BJ (cell line): ENCODE measurements at regions of chr14 and their contacts with region 1.

Region 1: GRCh38 chr14:55707365-55707804 is 127.4 kb downstream of the KTN1 start:
- DNase-seq: no peak
- H3K4me3 ChIP-seq: no peak overlapping the region
- H3K27me3 ChIP-seq: no peaks in the 10 kb centered on the region
- CTCF ChIP-seq: peak; percentile 68

Region 2: GRCh38 chr14:55502746-55503284 is 204.6 kb before region 1 on chr14:
- CTCF ChIA-PET with region 1: no interaction called
- POLR2A ChIA-PET with region 1: interaction called, 14 read pairs
- DNase-seq: no peak
- H3K4me3 ChIP-seq: no peak overlapping the region
- H3K27me3 ChIP-seq: 0 out of 2 replicates have a peak, but pooled peaks cover 3% of the 10 kb centered on the region
- CTCF ChIP-seq: no peak

Region 3: DNA sequence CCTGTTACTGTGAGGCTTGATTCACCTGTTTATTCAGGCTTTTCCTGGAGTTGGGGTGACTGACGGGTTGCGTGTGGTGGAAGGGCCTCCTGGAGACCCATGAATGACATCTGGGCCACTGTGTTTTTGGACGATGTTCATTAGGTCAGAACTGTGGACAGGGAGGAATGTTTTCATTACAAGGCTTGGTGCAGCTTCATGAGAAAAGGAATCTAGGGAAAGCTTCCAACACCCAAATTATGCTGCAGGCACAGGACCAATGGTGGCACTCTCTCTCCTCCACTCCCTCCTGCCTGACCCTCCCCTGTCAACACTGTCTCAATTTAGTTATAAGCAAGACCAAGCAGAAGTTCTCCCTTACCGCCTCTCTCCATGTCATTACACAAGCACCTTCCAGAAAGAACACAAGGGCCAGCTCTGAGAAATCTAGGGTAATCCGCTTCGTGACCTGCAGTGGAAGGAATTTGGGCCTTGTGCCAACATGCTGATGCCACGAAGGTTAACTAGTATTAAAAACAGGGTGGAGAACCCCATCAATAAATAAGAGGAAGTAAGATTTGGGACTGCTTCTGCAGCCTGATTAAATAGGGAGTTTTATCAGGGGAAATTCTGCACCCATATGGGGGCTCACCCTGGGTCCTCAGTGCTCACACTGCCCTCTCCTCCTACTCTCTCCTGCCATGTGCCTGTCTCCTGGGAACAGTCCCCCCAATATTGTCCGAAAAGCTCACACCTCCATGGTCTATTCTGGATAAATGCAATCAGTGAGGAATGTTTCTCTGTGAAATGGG is 73.0 kb after region 1 on chr14:
- CTCF ChIA-PET with region 1: no interaction called
- POLR2A ChIA-PET with region 1: no interaction called
- DNase-seq: peak; percentile 25
- H3K4me3 ChIP-seq: no peak overlapping the region
- H3K27me3 ChIP-seq: no peaks in the 10 kb centered on the region
- CTCF ChIP-seq: no peak

Region 4: DNA sequence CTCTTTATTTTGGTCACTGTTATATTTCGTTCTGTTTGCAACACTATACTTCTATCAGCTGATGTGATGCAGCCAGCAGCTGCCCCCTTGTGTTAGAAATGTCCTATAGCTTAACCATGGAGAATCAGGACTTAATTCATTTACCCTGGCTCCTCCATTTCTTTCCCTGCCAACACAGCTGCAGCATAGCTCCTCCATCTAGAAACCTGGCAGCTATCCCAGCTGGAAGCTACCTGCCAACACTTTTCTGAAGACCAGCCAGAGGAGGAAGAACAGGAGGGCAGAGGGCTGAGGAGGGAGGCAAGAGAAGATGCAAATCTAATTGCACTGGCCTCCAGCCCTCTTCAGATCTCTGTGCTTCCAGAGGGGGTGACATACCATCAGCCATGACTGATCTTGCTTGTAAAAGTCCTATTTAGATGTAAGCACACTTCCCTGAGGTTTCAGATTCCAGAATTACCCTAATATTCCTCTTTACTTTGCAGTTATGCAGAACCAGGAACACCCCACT is 715.4 kb after region 1 on chr14:
- CTCF ChIA-PET with region 1: interaction called, 19 read pairs
- POLR2A ChIA-PET with region 1: no interaction called
- DNase-seq: no peak
- H3K4me3 ChIP-seq: no peak overlapping the region
- H3K27me3 ChIP-seq: peaks cover 2% of the 10 kb centered on the region; the same call in 1 of the 2 replicates
- CTCF ChIP-seq: peak; percentile 80